ENCODE measurements at regions of chr5 and their contacts with region 1.

Region 1: DNA sequence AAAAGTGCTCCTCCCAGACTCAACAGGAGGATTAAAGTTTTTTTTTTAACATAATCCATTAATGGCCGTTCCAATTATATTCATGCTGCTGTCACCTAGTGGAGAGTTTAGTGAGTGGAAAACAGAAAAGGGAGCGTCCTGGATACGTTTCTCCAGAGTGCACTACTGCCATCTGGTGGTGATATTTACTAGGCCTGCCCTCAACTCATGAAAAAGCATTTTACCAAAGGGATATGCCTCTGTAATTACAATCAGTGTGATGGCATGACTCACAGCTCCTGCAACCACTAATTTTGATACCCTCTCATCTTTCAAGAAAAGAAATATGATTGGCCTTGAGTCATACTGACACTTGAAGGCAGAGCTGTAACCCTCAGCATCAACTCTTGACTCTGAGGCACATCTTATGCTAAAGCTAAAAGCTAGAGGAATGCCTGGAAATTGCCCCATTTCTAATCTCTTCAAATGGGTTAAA is 20.0 kb downstream of the MINAR2 start:
- DNase-seq: peak; percentile 82
- ATAC-seq: peak; percentile 98
- H3K4me3 Mint-ChIP-seq: no peak overlapping the region
- H3K27ac Mint-ChIP-seq: no peak overlapping the region
- H3K4me1 Mint-ChIP-seq: no peaks in the 10 kb centered on the region
- H3K27me3 Mint-ChIP-seq: no peaks in the 10 kb centered on the region

Region 2: DNA sequence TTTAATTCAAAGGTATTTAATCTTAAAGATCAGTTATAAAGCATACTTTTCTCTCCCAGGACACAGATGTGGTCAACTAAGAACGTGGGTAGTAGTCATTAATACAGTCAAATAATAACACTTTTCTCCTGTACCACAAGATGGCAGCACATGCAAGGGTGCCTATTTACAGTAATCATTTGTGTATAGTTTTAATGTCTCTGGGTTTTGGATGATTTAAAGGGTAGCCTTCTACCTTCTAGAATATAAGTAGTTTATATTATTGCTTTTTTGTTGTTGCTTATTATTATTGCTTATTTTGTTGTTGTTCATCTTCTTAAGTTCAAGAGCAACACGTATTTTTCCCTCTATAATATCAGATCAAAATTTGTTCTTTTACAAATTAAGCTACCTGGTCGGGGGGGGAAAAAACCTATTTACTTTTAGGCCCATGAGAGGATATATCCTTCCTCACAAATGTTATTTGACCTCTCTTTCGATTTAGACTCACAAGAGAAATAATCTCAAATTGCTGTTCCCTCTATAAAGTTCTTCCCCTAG is 862.3 kb before region 1 on chr5:
- CTCF ChIA-PET with region 1: interaction called, 17 read pairs
- POLR2A ChIA-PET with region 1: no interaction called
- intact Hi-C with region 1: loop called (anchors 1 kb)
- DNase-seq: peak; percentile 52
- ATAC-seq: peak; percentile 47
- H3K4me3 Mint-ChIP-seq: no peak overlapping the region
- H3K27ac Mint-ChIP-seq: no peak overlapping the region
- H3K4me1 Mint-ChIP-seq: no peaks in the 10 kb centered on the region
- H3K27me3 Mint-ChIP-seq: peaks cover 4% of the 10 kb centered on the region

Region 3: GRCh38 chr5:129172580-129172979 is 595.4 kb before region 1 on chr5:
- CTCF ChIA-PET with region 1: interaction called, 3 read pairs
- POLR2A ChIA-PET with region 1: no interaction called
- intact Hi-C with region 1: loop called in 1 of 2 experiments (anchors 1 kb)
- DNase-seq: no peak
- ATAC-seq: no peak
- H3K4me3 Mint-ChIP-seq: no peak overlapping the region
- H3K27ac Mint-ChIP-seq: no peak overlapping the region
- H3K4me1 Mint-ChIP-seq: no peaks in the 10 kb centered on the region
- H3K27me3 Mint-ChIP-seq: no peaks in the 10 kb centered on the region

Region 4: DNA sequence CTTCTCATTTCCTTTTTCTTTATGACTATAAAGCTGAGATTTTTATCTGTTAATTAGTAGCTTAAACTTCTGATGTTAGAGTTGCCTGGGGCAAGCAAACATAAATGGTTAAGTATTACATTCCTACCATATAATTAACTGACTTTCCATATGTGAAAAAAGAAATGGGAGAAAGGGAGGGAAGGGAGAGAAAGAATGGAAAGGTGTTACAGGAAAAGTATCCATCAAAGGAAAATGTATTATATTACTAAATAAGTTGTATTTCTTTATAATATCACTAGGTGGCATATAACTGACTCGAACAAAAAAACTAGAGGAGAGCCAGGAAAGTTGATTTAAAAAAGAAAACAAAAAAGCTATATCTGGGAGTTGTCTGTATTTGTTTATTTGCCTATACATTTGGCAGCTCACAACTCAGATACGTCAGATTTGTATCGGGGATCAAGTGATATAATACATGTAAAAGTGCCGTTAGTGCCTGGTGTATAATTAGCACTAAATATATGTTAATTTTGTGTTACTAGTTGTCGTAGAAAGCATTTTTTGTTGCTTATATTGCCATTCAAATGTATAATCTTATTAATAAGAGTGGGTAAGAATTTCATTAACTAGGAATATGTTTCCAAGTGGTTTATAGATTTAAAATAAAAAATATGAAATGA is 367.5 kb before region 1 on chr5:
- CTCF ChIA-PET with region 1: no interaction called
- POLR2A ChIA-PET with region 1: no interaction called
- intact Hi-C with region 1: loop called in 1 of 2 experiments (anchors 5 kb)
- DNase-seq: no peak
- ATAC-seq: no peak
- H3K4me3 Mint-ChIP-seq: no peak overlapping the region
- H3K27ac Mint-ChIP-seq: no peak overlapping the region
- H3K4me1 Mint-ChIP-seq: no peaks in the 10 kb centered on the region
- H3K27me3 Mint-ChIP-seq: no peaks in the 10 kb centered on the region

Region 5: GRCh38 chr5:129664337-129664937 is 103.5 kb before region 1 on chr5:
- CTCF ChIA-PET with region 1: interaction called, 4 read pairs
- POLR2A ChIA-PET with region 1: no interaction called
- intact Hi-C with region 1: loop called (anchors 1 kb)
- DNase-seq: peak; percentile 62
- ATAC-seq: no peak
- H3K4me3 Mint-ChIP-seq: no peak overlapping the region
- H3K27ac Mint-ChIP-seq: no peak overlapping the region
- H3K4me1 Mint-ChIP-seq: no peaks in the 10 kb centered on the region
- H3K27me3 Mint-ChIP-seq: peaks cover 3% of the 10 kb centered on the region

Region 6: GRCh38 chr5:129718471-129719090 is 49.4 kb before region 1 on chr5:
- CTCF ChIA-PET with region 1: no interaction called
- POLR2A ChIA-PET with region 1: no interaction called
- intact Hi-C with region 1: no loop called
- DNase-seq: no peak
- ATAC-seq: no peak
- H3K4me3 Mint-ChIP-seq: no peak overlapping the region
- H3K27ac Mint-ChIP-seq: no peak overlapping the region
- H3K4me1 Mint-ChIP-seq: no peaks in the 10 kb centered on the region
- H3K27me3 Mint-ChIP-seq: no peaks in the 10 kb centered on the region

Region 7: GRCh38 chr5:130141659-130142320 is 373.8 kb after region 1 on chr5:
- CTCF ChIA-PET with region 1: interaction called, 14 read pairs
- POLR2A ChIA-PET with region 1: no interaction called
- intact Hi-C with region 1: loop called (anchors 2 to 5 kb)
- DNase-seq: peak; percentile 50
- ATAC-seq: peak; percentile 58
- H3K4me3 Mint-ChIP-seq: no peak overlapping the region
- H3K27ac Mint-ChIP-seq: no peak overlapping the region
- H3K4me1 Mint-ChIP-seq: no peaks in the 10 kb centered on the region
- H3K27me3 Mint-ChIP-seq: peaks cover 3% of the 10 kb centered on the region

Region 8: GRCh38 chr5:130189961-130190360 is 422.0 kb after region 1 on chr5:
- CTCF ChIA-PET with region 1: no interaction called
- POLR2A ChIA-PET with region 1: no interaction called
- intact Hi-C with region 1: no loop called
- DNase-seq: no peak
- ATAC-seq: no peak
- H3K4me3 Mint-ChIP-seq: no peak overlapping the region
- H3K27ac Mint-ChIP-seq: no peak overlapping the region
- H3K4me1 Mint-ChIP-seq: no peaks in the 10 kb centered on the region
- H3K27me3 Mint-ChIP-seq: peaks cover 3% of the 10 kb centered on the region

Region 9: GRCh38 chr5:130365956-130366355 is 598.0 kb after region 1 on chr5:
- CTCF ChIA-PET with region 1: no interaction called
- POLR2A ChIA-PET with region 1: no interaction called
- intact Hi-C with region 1: no loop called
- DNase-seq: no peak
- ATAC-seq: no peak
- H3K4me3 Mint-ChIP-seq: no peak overlapping the region
- H3K27ac Mint-ChIP-seq: no peak overlapping the region
- H3K4me1 Mint-ChIP-seq: no peaks in the 10 kb centered on the region
- H3K27me3 Mint-ChIP-seq: no peaks in the 10 kb centered on the region